Endothelial cell of umbilical vein (primary cell): ENCODE measurements at regions of chr16 and their contacts with region 1.

Region 1: DNA sequence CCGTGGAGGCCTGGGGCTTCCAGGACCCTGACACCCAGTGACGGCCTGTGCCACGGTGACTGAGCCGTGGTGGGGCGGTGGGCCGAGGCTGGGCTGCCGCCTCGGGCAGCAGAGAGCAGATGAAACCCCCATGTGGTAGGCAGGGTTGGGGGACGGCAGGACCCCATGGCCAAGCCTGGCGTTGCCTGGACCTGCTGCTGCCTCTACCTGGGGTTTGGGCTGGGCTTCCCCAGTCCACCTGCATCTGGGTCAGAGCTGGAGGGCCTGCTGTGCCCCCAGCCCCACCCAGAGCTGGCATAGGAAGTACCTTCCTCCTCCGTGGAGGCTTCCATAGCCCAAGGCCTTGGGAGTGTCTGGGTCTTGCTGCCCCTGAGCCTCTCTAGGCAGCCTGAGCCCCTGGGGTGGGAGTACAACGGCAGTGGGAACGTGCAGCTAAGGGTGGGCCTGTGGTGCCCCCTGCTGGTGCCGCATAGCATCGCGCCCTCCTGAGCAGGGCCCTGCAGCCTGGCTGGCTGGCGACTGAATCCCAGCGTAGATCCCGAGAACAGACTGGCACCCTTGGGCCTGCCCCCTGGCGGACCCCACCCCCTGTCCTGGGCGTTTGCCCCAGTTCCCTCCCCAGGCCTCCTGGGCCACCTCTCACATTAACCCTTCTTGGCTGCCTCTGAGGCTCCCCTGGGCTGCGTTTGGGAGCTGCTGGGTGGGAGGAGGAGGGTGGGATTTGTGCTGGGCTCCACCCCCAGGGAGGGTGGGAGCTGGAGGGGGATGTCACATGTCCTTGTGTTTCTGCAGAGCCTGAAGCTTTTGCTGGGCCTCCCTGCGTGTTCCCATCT is 12.6 kb upstream of the ATP6V0C start:
- DNase-seq: peak; percentile 84
- H3K4me3 ChIP-seq: peak overlapping the region in 1 of 3 experiments; percentile 20
- H3K27ac ChIP-seq: no peak overlapping the region
- H3K4me1 ChIP-seq: no peaks in the 10 kb centered on the region
- H3K27me3 ChIP-seq: no peaks in the 10 kb centered on the region
- CTCF ChIP-seq: peak; percentile 96 to 99
- POLR2A ChIP-seq: no peak

Region 2: GRCh38 chr16:2194852-2195321 is 306.2 kb before region 1 on chr16:
- CTCF ChIA-PET with region 1: interaction called, 11 read pairs
- POLR2A ChIA-PET with region 1: no interaction called
- dilution Hi-C with region 1: no loop called
- intact Hi-C with region 1: no loop called
- DNase-seq: peak; percentile 31
- H3K4me3 ChIP-seq: no peak overlapping the region
- H3K27ac ChIP-seq: no peak overlapping the region
- H3K4me1 ChIP-seq: no peaks in the 10 kb centered on the region
- H3K27me3 ChIP-seq: peaks cover 26 to 35% of the 10 kb centered on the region in 2 experiments
- CTCF ChIP-seq: peak; percentile 8 to 39
- POLR2A ChIP-seq: no peak

Region 3: GRCh38 chr16:2296661-2297505 is 204.3 kb before region 1 on chr16:
- CTCF ChIA-PET with region 1: interaction called, 25 read pairs
- POLR2A ChIA-PET with region 1: no interaction called
- dilution Hi-C with region 1: no loop called
- intact Hi-C with region 1: loop called (anchors 1 kb)
- DNase-seq: peak; percentile 31
- H3K4me3 ChIP-seq: no peak overlapping the region
- H3K27ac ChIP-seq: no peak overlapping the region
- H3K4me1 ChIP-seq: no peaks in the 10 kb centered on the region
- H3K27me3 ChIP-seq: no peaks in the 10 kb centered on the region
- CTCF ChIP-seq: peak; percentile 42 to 44
- POLR2A ChIP-seq: no peak

Region 4: DNA sequence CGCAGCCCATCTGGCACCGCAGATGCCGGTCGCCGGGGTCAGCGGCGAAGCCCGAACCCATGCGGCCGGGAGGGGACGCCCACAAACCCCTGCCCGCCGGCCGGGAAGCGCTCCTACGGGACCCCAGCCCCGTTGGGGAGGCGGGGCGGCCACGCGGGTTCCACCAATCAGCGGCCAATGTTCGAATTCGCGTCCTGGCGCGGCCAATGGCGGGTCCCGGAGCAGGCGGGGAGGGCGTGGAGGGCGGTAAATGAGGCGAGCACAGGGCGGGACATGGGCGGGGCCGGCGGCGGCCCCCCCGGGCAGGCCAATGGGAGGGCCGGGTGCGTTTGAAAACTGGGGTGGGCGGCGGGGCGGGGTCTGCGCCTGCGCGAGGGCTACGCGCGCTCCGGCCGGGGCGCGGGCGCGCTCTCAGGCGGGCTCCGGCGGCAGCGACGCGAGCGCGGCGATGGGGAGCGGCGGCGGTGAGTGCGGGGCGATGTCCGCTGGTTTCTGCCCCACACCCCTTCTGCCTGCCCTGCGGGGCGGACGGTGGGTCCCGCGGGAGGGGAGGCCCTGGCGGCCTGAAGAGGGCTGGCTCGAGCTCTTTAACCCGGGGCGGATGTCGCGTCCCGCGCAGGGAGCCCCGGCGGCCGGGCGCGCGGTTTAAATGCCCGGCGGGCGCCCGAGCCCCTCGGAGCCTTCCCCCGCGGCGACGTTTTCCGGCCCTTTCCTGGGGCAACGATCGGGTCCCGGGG is 71.9 kb before region 1 on chr16 and contains the start of gene CCNF:
- CTCF ChIA-PET with region 1: interaction called, 25 read pairs
- POLR2A ChIA-PET with region 1: no interaction called
- dilution Hi-C with region 1: no loop called
- intact Hi-C with region 1: loop called (anchors 1 kb)
- DNase-seq: peak; percentile 96
- H3K4me3 ChIP-seq: peak within 1 kb of the TSS; percentile 75 to 92 (median 85)
- H3K27ac ChIP-seq: peak within 1 kb of the TSS; percentile 38
- H3K4me1 ChIP-seq: peaks cover 21% of the 10 kb centered on the region
- H3K27me3 ChIP-seq: no peaks in the 10 kb centered on the region
- CTCF ChIP-seq: no peak
- POLR2A ChIP-seq: peak; percentile 69
- total RNA-seq, gene CCNF: 46.6 and 48.9 TPM in 2 replicates

Region 5: GRCh38 chr16:2486645-2487516 is 14.3 kb before region 1 on chr16:
- CTCF ChIA-PET with region 1: interaction called, 14 read pairs
- POLR2A ChIA-PET with region 1: no interaction called
- dilution Hi-C with region 1: no loop called
- intact Hi-C with region 1: no loop called
- DNase-seq: no peak
- H3K4me3 ChIP-seq: no peak overlapping the region
- H3K27ac ChIP-seq: no peak overlapping the region
- H3K4me1 ChIP-seq: no peaks in the 10 kb centered on the region
- H3K27me3 ChIP-seq: no peaks in the 10 kb centered on the region
- CTCF ChIP-seq: no peak
- POLR2A ChIP-seq: no peak